Head of caudate nucleus (tissue), 42 donors: ENCODE measurements at regions of chr3 and their contacts with region 1.

Region 1: GRCh38 chr3:46970391-46971091 is 6.0 kb downstream of the CCDC12 start:
- DNase-seq: peak in 2 of 42 donors; percentile 8 to 47

Region 2: GRCh38 chr3:46931631-46932331 is 38.8 kb before region 1 on chr3:
- intact Hi-C with region 1: loop called (anchors 5 kb)
- DNase-seq: peak in 10 of 42 donors; percentile 12 to 63 (median 39)